ENCODE measurements at regions of chr19 and their contacts with region 1.

Region 1: DNA sequence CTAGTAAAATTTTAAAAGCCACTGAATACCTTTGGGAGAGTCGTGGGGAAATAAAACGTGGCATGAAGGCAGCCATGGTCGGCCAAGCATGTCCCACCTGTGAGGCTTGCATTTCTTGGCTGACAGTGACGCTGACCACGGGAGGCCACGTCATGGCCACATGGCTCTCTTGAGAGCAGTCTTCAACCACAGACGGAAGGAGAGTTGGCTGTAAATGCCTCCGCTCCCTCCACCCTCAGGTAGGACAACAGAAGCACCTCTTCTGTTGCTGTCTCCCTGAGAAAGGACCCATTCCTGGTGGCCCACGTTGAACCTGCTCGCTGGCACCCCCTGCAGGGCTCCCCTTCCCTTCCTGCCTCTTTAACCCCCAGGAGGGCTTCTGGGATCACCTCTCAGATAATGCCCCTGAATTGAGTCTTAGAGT is 10.6 kb upstream of the LRRC25 start:
- DNase-seq: no peak
- H3K4me3 ChIP-seq: no peak overlapping the region
- H3K27me3 ChIP-seq: no peaks in the 10 kb centered on the region
- CTCF ChIP-seq: peak; percentile 56

Region 2: DNA sequence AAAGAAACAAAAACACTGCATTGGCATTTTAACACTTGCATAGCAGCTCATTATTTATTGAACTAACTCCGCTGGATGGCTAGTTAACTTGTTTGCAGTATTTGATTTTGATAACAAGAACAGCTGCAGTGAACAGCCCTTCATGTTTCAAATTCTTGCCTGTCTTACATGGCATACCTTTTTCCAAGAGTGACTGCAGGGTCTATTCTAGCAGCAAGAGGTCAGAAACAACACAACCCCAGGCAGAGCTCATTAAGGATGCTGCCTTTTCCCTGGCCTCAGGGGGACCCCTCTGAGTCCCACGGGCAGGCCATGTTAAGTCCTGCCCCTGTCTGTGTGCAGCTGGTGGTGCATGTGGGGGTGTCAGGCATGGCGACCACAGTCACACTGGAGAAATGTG is 51.0 kb before region 1 on chr19:
- CTCF ChIA-PET with region 1: interaction called, 17 read pairs
- POLR2A ChIA-PET with region 1: no interaction called
- DNase-seq: no peak
- H3K4me3 ChIP-seq: no peak overlapping the region
- H3K27me3 ChIP-seq: no peaks in the 10 kb centered on the region
- CTCF ChIP-seq: no peak

Region 3: DNA sequence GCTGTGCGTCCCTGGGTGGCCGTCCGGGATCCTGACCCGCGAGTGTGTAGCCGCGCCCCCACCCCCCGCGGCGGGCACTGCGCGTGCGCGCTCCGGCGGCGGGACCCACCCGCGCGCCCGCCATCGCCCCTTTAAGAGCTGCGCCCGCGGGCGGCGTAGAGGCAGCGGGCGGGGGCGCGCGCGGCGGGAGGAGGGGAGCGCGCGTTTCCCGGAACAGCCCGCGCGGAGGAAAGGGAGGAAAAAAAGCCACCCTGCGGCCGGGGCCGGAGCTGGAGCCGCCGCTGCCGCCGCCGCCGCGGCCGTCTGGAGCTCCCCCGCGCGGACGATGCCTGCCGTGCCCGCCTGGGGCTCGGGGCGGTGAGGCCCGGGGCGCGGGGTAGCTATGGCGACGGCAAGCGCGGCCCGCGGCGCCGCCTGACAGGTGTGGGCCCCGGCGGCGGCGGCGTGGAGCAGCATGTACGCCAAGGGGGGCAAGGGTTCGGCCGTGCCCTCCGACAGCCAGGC is 11.2 kb after region 1 on chr19 and contains the start of gene SSBP4:
- CTCF ChIA-PET with region 1: interaction called, 14 read pairs
- POLR2A ChIA-PET with region 1: no interaction called
- DNase-seq: no peak
- H3K4me3 ChIP-seq: peak within 1 kb of the TSS; percentile 87
- H3K27me3 ChIP-seq: no peaks in the 10 kb centered on the region
- CTCF ChIP-seq: no peak
- polyA plus RNA-seq, gene SSBP4: 16.3 and 24.1 TPM in 2 replicates

Region 4: DNA sequence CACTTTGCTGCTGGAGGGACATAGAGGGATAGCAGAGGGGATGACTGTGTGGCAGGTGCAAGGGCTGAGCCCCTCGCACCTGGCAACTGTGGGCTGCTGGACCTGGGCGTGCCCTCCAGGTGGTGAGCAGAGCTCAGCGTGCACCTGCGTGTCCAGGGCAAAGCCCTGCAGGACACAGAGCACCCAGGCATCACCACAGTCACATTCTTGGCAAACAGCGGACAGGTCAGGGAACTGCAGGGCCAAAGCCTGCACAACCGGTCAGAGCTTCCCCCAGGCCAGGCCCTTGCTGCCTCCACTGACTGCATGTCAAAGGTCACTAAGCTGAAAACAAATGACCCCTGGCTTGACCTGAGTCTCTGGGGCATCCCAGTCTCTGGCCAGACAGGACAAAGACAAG is 38.8 kb after region 1 on chr19:
- CTCF ChIA-PET with region 1: no interaction called
- POLR2A ChIA-PET with region 1: no interaction called
- DNase-seq: no peak
- H3K4me3 ChIP-seq: no peak overlapping the region
- H3K27me3 ChIP-seq: no peaks in the 10 kb centered on the region
- CTCF ChIP-seq: no peak